ENCODE measurements at regions of chr3 and their contacts with region 1.

Region 1: DNA sequence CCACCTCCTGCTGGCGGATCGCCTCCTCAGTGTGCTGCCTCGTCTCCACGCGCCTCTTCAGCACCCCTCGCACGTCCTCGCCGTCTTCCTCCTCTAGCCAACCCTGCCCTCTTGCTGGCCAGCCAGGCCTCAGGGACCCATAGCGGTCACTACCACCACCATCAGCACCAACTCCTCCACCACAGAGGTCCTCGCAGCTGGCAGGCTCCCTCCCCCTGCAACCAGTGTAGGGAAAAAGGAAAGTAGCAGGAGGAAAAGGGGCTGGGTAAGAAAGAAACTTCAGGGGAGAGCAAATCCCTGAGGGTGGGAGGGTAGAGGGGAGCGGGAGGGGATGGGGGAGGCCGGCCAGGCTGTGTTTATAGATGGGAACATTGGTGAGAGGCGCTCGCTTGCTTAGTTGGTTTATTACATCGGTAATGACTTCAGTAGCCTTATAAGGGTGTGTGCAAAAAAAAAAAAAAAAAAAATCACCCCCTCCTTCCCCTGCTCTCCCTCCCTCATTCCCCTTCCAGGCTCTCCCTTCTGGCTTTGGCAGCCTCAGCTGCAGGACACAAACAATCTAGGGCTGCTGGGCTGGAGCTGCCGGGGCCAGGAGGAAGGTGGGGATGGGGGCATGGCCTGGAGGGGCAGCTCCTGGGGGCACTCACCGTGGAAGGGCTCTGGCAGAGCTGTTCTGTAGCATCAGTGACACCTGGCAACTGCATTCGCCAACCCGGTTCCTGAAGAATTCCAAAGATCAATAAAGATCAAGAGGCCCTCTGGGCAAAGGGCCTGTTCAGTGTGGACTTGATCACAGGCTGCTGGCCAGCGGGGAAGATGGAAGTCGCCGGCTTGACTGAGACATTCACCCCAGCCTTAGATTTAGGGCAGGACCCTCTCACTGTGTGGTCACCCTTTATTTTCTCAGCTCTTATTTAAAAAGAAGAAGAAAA is 116.2 kb upstream of the HACD2 start:
- DNase-seq: no peak
- H3K4me3 ChIP-seq: peak overlapping the region; percentile 66 to 81 (median 74)
- H3K27ac ChIP-seq: peak overlapping the region; percentile 94 to 97 (median 96)
- H3K4me1 ChIP-seq: peaks cover 6 to 55% (median 54%) of the 10 kb centered on the region in 4 donors
- H3K27me3 ChIP-seq: no peaks in the 10 kb centered on the region
- CTCF ChIP-seq: no peak
- EP300 ChIP-seq: no peak
- POLR2A ChIP-seq: peak; percentile 46

Region 2: DNA sequence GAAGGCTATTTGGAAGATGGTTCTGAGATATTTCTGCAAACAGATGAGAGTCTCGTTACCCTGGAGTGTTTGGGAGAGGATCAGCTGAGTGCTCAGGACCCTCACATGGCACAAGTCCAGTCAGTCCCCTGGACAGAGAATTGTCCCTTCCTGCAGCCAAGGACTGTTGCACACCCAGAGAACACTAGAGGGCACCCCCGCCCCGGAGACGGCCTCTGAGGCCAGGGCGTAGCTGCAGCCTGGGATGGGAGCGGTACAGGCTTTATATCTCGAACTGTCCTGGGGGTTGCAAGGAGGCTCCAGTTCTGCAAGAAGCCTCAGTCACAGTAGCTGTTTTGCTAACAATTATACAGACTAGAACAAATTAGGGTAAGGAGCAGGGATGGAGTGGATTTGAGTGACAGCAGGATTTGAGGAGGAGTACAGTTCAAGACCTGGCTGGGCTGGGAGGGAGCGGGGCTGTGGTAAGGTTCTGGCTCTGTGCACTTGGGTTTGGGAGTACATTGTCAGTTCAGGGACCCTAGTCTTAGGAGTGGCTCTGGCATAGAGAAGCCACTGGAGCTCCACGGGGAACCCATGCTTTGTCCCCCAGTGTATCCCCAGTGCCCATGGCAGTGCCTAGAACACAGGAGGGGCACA is 48.6 kb before region 1 on chr3:
- intact Hi-C with region 1: loop called (anchors 5 kb)
- DNase-seq: peak; percentile 95
- H3K4me3 ChIP-seq: no peak overlapping the region
- H3K27ac ChIP-seq: peak overlapping the region; percentile 94 to 97 (median 96)
- H3K4me1 ChIP-seq: peaks cover 45 to 96% (median 95%) of the 10 kb centered on the region in 4 donors
- H3K27me3 ChIP-seq: no peaks in the 10 kb centered on the region
- CTCF ChIP-seq: peak; percentile 75 to 91 (median 80)
- EP300 ChIP-seq: no peak
- POLR2A ChIP-seq: no peak

Measured in esophagus muscularis mucosa (tissue), 4 donors.